ENCODE measurements at regions of chr14 and their contacts with region 1.

Region 1: GRCh38 chr14:72111911-72112310 is 179.7 kb downstream of the RGS6 start:
- DNase-seq: no peak
- ATAC-seq: no peak
- H3K4me3 ChIP-seq: no peak overlapping the region
- H3K4me3 Mint-ChIP-seq: no peak overlapping the region
- H3K27ac ChIP-seq: no peak overlapping the region
- H3K27ac Mint-ChIP-seq: no peak overlapping the region
- H3K4me1 ChIP-seq: no peaks in the 10 kb centered on the region
- H3K4me1 Mint-ChIP-seq: no peaks in the 10 kb centered on the region
- H3K27me3 ChIP-seq: peaks cover 0 to 4% of the 10 kb centered on the region in 2 experiments
- H3K27me3 Mint-ChIP-seq: peaks cover 12 to 14% of the 10 kb centered on the region in 2 donors

Region 2: GRCh38 chr14:70416338-70416724 is 1695.6 kb before region 1 on chr14:
- CTCF ChIA-PET with region 1: no interaction called
- POLR2A ChIA-PET with region 1: interaction called in 1 of 2 experiments, 12 read pairs
- DNase-seq: no peak
- ATAC-seq: peak in 3 of 4 experiments; percentile 32 to 42 (median 36)
- H3K4me3 ChIP-seq: peak overlapping the region; percentile 79 to 99
- H3K4me3 Mint-ChIP-seq: peak overlapping the region; percentile 92 to 97 (median 92)
- H3K27ac ChIP-seq: peak overlapping the region; percentile 65
- H3K27ac Mint-ChIP-seq: peak overlapping the region; percentile 91 to 93
- H3K4me1 ChIP-seq: peaks cover 10 to 12% of the 10 kb centered on the region in 2 experiments
- H3K4me1 Mint-ChIP-seq: peaks cover 49 to 51% (median 49%) of the 10 kb centered on the region in 3 donors
- H3K27me3 ChIP-seq: peaks cover 0 to under 1% of the 10 kb centered on the region in 2 experiments
- H3K27me3 Mint-ChIP-seq: peaks cover 3 to 4% of the 10 kb centered on the region in 2 donors

Region 3: GRCh38 chr14:71551291-71551950 is 560.5 kb before region 1 on chr14:
- CTCF ChIA-PET with region 1: no interaction called
- POLR2A ChIA-PET with region 1: no interaction called
- DNase-seq: no peak
- ATAC-seq: no peak
- H3K4me3 ChIP-seq: no peak overlapping the region
- H3K4me3 Mint-ChIP-seq: no peak overlapping the region
- H3K27ac ChIP-seq: no peak overlapping the region
- H3K27ac Mint-ChIP-seq: no peak overlapping the region
- H3K4me1 ChIP-seq: peaks cover 10 to 34% of the 10 kb centered on the region in 2 experiments
- H3K4me1 Mint-ChIP-seq: peaks cover 52 to 57% (median 54%) of the 10 kb centered on the region in 3 donors
- H3K27me3 ChIP-seq: no peaks in the 10 kb centered on the region
- H3K27me3 Mint-ChIP-seq: no peaks in the 10 kb centered on the region

Region 4: GRCh38 chr14:72318648-72319047 is 206.7 kb after region 1 on chr14:
- CTCF ChIA-PET with region 1: no interaction called
- POLR2A ChIA-PET with region 1: no interaction called
- DNase-seq: no peak
- ATAC-seq: no peak
- H3K4me3 ChIP-seq: no peak overlapping the region
- H3K4me3 Mint-ChIP-seq: no peak overlapping the region
- H3K27ac ChIP-seq: no peak overlapping the region
- H3K27ac Mint-ChIP-seq: no peak overlapping the region
- H3K4me1 ChIP-seq: no peaks in the 10 kb centered on the region
- H3K4me1 Mint-ChIP-seq: no peaks in the 10 kb centered on the region
- H3K27me3 ChIP-seq: peaks cover 0 to 3% of the 10 kb centered on the region in 2 experiments
- H3K27me3 Mint-ChIP-seq: peaks cover 18 to 27% of the 10 kb centered on the region in 2 donors

Measured in T-cell (primary cell).